Breast epithelium (tissue), 4 donors: ENCODE measurements at regions of chr10 and their contacts with region 1.

Region 1: DNA sequence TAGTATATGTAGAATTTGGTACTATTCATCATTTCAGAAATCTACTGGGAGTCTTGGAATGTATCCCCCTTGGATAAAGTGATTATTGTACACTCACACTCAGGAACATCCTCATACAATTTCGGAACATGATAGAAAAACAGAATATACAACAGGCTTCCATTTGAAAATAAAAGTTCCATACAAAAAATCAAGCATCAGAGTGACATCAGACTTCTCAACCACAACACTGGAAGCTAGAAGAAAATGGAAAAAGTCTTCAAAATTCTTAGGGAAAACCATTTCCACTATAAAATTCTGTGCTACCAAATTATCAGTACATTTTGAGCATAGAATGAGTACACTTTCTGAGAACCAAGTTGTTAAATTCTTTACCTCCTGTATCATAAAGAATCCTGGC is 8.8 kb downstream of the LYZL1 start:
- DNase-seq: no peak
- H3K4me3 ChIP-seq: no peak overlapping the region
- H3K27ac ChIP-seq: no peak overlapping the region
- H3K4me1 ChIP-seq: no peaks in the 10 kb centered on the region
- H3K27me3 ChIP-seq: no peaks in the 10 kb centered on the region
- CTCF ChIP-seq: no peak
- POLR2A ChIP-seq: no peak

Region 2: DNA sequence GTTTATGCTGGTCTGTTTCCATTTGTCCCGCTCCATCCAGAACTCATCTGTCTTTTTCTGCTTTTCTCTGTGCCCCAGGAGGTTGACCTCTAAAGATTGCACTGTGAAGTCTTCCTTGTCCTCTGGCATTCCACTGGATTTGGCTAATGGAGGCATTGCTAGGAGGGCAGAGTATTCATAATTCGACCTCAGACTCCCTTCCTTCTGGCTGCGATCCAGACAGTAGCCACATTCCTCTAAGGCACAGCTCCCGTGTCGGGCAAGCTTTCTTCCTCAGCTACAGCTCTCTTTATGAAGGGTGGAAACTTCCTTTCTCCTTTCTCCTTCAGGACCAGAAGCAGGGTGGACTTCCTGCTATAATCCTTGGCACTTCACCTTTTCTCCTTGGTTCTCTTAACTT is 444.5 kb before region 1 on chr10:
- intact Hi-C with region 1: loop called (anchors 10 kb)
- DNase-seq: peak in 1 of 2 donors; percentile 23
- H3K4me3 ChIP-seq: no peak overlapping the region
- H3K27ac ChIP-seq: no peak overlapping the region
- H3K4me1 ChIP-seq: no peaks in the 10 kb centered on the region
- H3K27me3 ChIP-seq: no peaks in the 10 kb centered on the region
- CTCF ChIP-seq: no peak
- POLR2A ChIP-seq: no peak

Region 3: GRCh38 chr10:29229258-29229705 is 68.4 kb before region 1 on chr10:
- intact Hi-C with region 1: no loop called
- DNase-seq: no peak
- H3K4me3 ChIP-seq: no peak overlapping the region
- H3K27ac ChIP-seq: no peak overlapping the region
- H3K4me1 ChIP-seq: no peaks in the 10 kb centered on the region
- H3K27me3 ChIP-seq: peaks cover 0 to 4% of the 10 kb centered on the region in 2 donors
- CTCF ChIP-seq: no peak
- POLR2A ChIP-seq: no peak